ENCODE measurements at regions of chr1 and their contacts with region 1.

Region 1: GRCh38 chr1:37682334-37682987 is 9.9 kb upstream of the CDCA8 start:
- DNase-seq: peak; percentile 61
- H3K4me3 ChIP-seq: no peak overlapping the region
- H3K27ac ChIP-seq: no peak overlapping the region
- H3K4me1 ChIP-seq: no peaks in the 10 kb centered on the region
- H3K27me3 ChIP-seq: no peaks in the 10 kb centered on the region
- CTCF ChIP-seq: peak; percentile 73 to 81
- POLR2A ChIP-seq: no peak

Region 2: GRCh38 chr1:37449936-37450335 is 232.5 kb before region 1 on chr1:
- CTCF ChIA-PET with region 1: interaction called, 10 read pairs
- POLR2A ChIA-PET with region 1: no interaction called
- dilution Hi-C with region 1: no loop called
- intact Hi-C with region 1: loop called (anchors 1 kb)
- DNase-seq: no peak
- H3K4me3 ChIP-seq: no peak overlapping the region
- H3K27ac ChIP-seq: no peak overlapping the region
- H3K4me1 ChIP-seq: no peaks in the 10 kb centered on the region
- H3K27me3 ChIP-seq: peaks cover 0 to 6% of the 10 kb centered on the region in 2 experiments
- CTCF ChIP-seq: no peak
- POLR2A ChIP-seq: no peak

Region 3: DNA sequence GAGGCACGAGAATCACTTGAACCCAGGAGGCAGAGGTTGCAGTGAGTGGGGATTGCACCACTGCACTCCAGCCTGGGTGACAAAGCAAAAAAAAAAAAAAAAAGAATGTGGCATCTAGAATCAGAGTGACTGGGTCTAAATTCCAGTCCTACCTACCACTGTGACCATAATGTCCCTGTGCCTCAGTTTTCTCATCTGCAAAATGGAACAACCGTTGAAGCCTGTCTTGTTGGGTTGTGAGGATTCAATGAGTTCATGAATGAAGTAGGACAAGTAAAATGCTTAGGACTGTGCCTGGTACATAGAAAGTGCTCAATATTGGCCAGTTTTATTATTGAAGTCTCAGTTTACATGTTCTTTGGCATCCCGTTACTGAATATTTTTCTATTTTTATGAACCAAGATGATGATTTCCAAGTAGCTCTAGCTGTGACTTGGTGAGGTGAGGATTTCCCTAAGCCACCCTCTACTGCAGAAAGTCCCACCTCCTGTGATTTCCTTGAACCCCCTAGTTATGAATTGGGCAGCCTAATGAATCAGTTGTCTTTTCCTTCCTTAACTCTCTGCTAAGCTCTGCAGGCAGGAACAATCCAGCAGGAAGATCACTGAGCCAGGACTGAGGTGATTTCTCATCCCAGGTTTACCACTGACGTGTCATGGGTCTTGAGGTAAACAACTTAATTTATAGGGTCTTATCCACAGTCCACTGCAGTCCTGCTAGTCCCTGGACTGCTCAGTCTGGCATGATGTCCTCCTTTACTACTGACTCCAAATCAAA is 149.0 kb before region 1 on chr1:
- CTCF ChIA-PET with region 1: no interaction called
- POLR2A ChIA-PET with region 1: no interaction called
- dilution Hi-C with region 1: no loop called
- intact Hi-C with region 1: no loop called
- DNase-seq: no peak
- H3K4me3 ChIP-seq: no peak overlapping the region
- H3K27ac ChIP-seq: peak overlapping the region; percentile 98
- H3K4me1 ChIP-seq: peaks cover 17% of the 10 kb centered on the region
- H3K27me3 ChIP-seq: no peaks in the 10 kb centered on the region
- CTCF ChIP-seq: no peak
- POLR2A ChIP-seq: no peak

Region 4: GRCh38 chr1:37561133-37562132 is 121.0 kb before region 1 on chr1:
- CTCF ChIA-PET with region 1: interaction called, 10 read pairs
- POLR2A ChIA-PET with region 1: no interaction called
- dilution Hi-C with region 1: no loop called
- intact Hi-C with region 1: loop called (anchors 1 kb)
- DNase-seq: peak; percentile 15
- H3K4me3 ChIP-seq: no peak overlapping the region
- H3K27ac ChIP-seq: no peak overlapping the region
- H3K4me1 ChIP-seq: peaks cover 10% of the 10 kb centered on the region
- H3K27me3 ChIP-seq: no peaks in the 10 kb centered on the region
- CTCF ChIP-seq: peak; percentile 49 to 55
- POLR2A ChIP-seq: no peak

Region 5: DNA sequence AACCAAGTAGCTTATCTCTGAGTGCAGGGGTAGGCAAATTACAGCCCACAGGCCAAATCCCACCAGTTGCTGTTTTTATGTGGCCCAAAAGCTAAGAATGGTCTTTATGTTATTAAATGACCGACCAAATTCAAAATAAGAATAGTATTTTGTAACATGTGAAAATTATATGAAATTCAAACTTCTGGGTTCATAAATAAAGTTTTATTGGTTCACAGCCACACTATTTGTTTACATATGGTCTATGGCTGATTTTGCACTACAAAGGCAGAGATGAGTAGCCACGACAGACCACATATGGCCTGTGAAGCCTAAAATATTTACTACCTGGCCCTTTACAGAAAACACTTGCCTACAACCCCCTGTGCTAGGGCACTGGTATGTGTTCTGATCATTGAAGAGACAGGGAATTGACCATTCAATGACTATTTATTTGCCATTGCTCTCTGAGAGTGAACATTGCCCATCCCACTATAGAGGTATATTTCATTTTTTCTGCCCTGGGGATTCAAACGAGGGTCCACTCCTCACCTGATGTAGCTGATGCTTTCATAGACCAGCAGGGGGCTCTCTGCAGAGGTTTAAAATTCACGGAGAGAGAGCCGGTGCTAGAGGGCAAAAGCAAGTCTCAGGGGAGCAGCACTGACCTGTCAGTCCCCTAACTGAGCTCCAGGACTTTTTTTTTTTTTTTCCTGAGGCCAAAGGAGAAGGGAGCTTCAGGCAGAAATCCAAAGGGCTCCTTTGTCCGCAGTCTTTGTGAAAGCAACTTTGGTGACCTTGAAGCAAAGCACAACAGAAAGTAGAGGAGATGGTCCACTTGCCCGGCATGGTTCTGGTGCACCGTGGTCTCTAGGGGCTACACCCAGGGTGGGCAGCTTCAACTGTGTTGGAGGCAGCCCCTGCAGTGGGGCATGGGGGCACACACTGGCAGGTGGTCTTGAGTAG is 79.4 kb before region 1 on chr1:
- CTCF ChIA-PET with region 1: interaction called, 69 read pairs
- POLR2A ChIA-PET with region 1: interaction called, 4 read pairs
- dilution Hi-C with region 1: no loop called
- intact Hi-C with region 1: loop called (anchors 1 kb)
- DNase-seq: peak; percentile 20
- H3K4me3 ChIP-seq: no peak overlapping the region
- H3K27ac ChIP-seq: no peak overlapping the region
- H3K4me1 ChIP-seq: no peaks in the 10 kb centered on the region
- H3K27me3 ChIP-seq: peaks cover 8 to 24% of the 10 kb centered on the region in 2 experiments
- CTCF ChIP-seq: peak; percentile 67
- POLR2A ChIP-seq: no peak

Region 6: DNA sequence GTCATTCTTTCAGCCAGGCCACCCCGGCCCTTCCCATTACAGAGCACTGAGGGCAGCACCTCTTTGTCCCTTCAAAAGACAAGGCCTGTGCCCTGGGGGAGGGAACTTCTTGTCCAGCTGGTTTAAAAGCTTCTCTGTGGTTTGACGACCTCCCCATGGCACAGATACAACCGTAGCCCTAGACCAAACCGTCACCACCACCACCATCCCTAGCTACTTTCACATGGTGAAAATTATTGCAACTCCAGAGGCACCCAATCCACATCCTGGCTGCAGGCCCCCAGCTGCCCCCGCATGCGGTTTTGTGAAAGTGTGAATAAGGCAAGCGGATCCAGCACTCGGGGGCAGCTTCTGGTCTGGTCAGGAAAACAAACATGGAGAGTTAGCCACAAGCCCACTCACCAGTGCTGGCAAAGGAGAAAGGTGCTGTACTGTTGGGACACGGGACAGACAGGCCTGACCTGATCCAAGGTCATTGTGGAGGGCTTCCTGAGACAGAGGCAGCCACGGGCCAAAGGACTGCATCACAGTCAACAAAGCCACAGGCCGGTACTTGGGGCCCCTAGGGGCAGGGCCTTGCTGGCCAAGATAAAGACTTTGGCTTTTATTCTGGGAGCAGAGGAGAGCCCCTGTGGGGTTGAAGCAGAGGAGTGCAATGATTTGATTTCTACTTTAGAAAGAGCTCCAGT is 41.1 kb after region 1 on chr1:
- CTCF ChIA-PET with region 1: no interaction called
- POLR2A ChIA-PET with region 1: no interaction called
- dilution Hi-C with region 1: no loop called
- intact Hi-C with region 1: no loop called
- DNase-seq: no peak
- H3K4me3 ChIP-seq: no peak overlapping the region
- H3K27ac ChIP-seq: no peak overlapping the region
- H3K4me1 ChIP-seq: no peaks in the 10 kb centered on the region
- H3K27me3 ChIP-seq: no peaks in the 10 kb centered on the region
- CTCF ChIP-seq: no peak
- POLR2A ChIP-seq: no peak

Measured in endothelial cell of umbilical vein (primary cell).